CD8-positive, alpha-beta memory T cell (primary cell): ENCODE measurements at regions of chr3 and their contacts with region 1.

Region 1: DNA sequence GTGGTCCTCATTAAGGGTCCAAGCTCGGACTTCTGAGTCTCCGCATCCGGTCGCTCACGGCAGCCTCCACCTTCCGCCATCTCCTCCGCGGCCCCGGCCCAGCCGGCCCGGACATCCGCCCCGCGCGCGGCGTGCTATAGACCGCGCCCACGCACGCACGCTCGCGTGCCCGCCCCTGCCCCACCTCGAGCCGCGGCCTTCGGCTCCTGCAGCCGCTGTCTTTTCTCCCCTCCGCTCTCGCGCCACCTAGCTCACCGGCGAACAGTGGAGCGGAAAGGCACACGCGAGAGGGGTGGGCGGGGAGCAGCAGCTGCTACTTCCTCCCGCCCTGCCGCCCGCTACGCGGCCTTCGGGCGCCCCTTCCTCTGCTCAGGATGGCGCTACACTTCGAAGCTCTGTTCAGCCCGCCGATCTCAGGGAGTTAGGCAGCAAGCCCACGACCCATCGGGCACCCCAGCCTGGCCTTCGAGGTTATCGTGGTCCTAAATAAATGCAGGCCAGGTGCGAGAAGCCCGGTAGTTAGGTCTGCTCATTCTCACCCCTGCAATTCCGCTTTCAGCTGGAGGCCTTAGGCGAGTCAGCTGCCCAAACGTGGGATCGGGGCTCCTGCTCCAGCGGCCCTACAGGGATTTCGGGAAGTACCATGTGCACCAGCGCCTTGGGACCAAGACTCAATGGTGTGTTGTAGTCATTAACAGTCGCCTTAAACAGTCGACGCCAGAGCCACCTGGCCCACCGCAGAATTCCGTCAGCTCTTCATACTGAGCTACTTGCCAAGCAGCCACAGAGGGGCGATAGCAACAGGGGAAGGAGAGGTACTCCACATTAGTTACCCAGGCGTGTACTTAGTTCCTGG is at the start of gene USP4:
- DNase-seq: peak; percentile 82 to 95 (median 90)
- H3K4me3 ChIP-seq: peak within 1 kb of the TSS; percentile 84
- H3K4me3 Mint-ChIP-seq: peak within 1 kb of the TSS; percentile 88 to 96 (median 95)
- H3K27ac ChIP-seq: peak within 1 kb of the TSS; percentile 98
- H3K27ac Mint-ChIP-seq: peak within 1 kb of the TSS; percentile 95 to 100 (median 97)
- H3K4me1 ChIP-seq: peaks cover 41% of the 10 kb centered on the region
- H3K4me1 Mint-ChIP-seq: peaks cover 38 to 54% (median 41%) of the 10 kb centered on the region in 3 donors
- H3K27me3 ChIP-seq: no peaks in the 10 kb centered on the region
- H3K27me3 Mint-ChIP-seq: peaks cover 0 to 1% of the 10 kb centered on the region in 2 donors
- total RNA-seq, gene USP4: 72.6 to 73.0 TPM

Region 2: GRCh38 chr3:49199239-49199899 is 140.8 kb before region 1 on chr3:
- CTCF ChIA-PET with region 1: no interaction called
- POLR2A ChIA-PET with region 1: no interaction called
- DNase-seq: no peak
- H3K4me3 ChIP-seq: no peak overlapping the region
- H3K4me3 Mint-ChIP-seq: no peak overlapping the region
- H3K27ac ChIP-seq: no peak overlapping the region
- H3K27ac Mint-ChIP-seq: no peak overlapping the region
- H3K4me1 ChIP-seq: no peaks in the 10 kb centered on the region
- H3K4me1 Mint-ChIP-seq: no peaks in the 10 kb centered on the region
- H3K27me3 ChIP-seq: no peaks in the 10 kb centered on the region
- H3K27me3 Mint-ChIP-seq: peaks cover 11 to 24% of the 10 kb centered on the region in 2 donors

Region 3: DNA sequence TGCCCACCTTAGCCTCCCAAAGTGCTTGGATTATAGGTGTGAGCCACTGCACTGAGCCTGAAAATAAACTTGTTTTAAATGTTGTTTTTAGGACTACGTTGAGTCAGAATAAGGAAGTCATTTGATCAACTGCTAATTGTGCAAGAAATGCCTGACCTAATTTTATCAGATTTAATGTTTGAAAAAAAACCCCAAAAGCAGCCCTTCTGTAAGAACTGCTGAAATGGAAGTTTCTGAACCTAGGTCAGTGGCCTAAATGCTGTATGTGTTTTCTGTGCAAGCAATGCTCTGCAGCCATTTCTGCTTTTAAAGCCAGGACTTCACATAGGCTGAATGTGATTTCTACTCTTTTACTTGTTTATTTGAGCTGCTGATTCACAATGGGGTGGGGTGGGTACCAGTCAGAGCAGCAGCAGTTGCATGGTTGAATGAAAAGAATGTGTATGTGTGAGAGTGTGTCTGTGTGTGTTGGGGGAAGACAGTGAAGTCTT is 11.4 kb after region 1 on chr3:
- CTCF ChIA-PET with region 1: interaction called, 21 read pairs
- POLR2A ChIA-PET with region 1: interaction called, 7 read pairs
- DNase-seq: no peak
- H3K4me3 ChIP-seq: no peak overlapping the region
- H3K4me3 Mint-ChIP-seq: peak overlapping the region in 1 of 7 donors; percentile 44
- H3K27ac ChIP-seq: no peak overlapping the region
- H3K27ac Mint-ChIP-seq: peak overlapping the region in 3 of 8 donors; percentile 51 to 78 (median 61)
- H3K4me1 ChIP-seq: peaks cover 6% of the 10 kb centered on the region
- H3K4me1 Mint-ChIP-seq: peaks cover 6 to 14% (median 11%) of the 10 kb centered on the region in 3 donors
- H3K27me3 ChIP-seq: no peaks in the 10 kb centered on the region
- H3K27me3 Mint-ChIP-seq: peaks cover 0 to 1% of the 10 kb centered on the region in 2 donors

Region 4: DNA sequence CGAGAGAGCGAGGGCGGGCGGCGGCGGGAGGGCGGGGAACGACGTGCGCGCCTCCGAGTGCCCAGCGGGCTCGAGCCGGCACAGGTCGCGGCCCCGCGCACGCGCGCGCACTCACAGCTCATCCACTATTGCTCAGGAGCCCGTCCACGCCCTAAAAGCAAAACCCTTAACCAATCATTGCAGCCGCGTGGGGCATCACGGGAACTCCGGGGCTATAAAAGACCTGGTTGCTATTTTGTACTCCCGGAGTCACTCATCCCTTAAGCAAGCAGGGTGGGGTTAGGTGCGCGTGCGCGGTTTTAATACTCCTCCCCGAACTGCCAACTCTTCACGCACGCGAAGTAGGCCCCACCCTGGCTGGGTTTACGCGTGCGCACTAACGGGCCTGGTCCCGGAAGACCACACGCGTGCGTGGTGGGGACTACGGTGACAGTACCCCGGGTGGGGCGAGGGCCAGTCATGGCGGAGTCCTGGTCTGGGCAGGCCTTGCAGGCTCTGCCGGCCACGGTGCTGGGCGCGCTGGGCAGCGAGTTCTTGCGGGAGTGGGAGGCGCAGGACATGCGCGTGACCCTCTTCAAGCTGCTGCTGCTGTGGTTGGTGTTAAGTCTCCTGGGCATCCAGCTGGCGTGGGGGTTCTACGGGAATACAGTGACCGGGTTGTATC is 71.9 kb after region 1 on chr3 and contains the starts of genes RHOA and TCTA:
- CTCF ChIA-PET with region 1: interaction called, 19 read pairs
- POLR2A ChIA-PET with region 1: interaction called, 53 read pairs
- DNase-seq: peak; percentile 98 to 100 (median 99)
- H3K4me3 ChIP-seq: peak within 1 kb of the TSS; percentile 93
- H3K4me3 Mint-ChIP-seq: peak within 1 kb of the TSS; percentile 88 to 96 (median 94)
- H3K27ac ChIP-seq: peak within 1 kb of the TSS; percentile 95
- H3K27ac Mint-ChIP-seq: peak within 1 kb of the TSS; percentile 90 to 97 (median 96)
- H3K4me1 ChIP-seq: peaks cover 76% of the 10 kb centered on the region
- H3K4me1 Mint-ChIP-seq: peaks cover 69 to 82% (median 74%) of the 10 kb centered on the region in 3 donors
- H3K27me3 ChIP-seq: no peaks in the 10 kb centered on the region
- H3K27me3 Mint-ChIP-seq: peaks cover 0 to 2% of the 10 kb centered on the region in 2 donors
- total RNA-seq, gene RHOA: 478 to 506 TPM
- total RNA-seq, gene TCTA: 21.3 to 23.2 TPM

Region 5: DNA sequence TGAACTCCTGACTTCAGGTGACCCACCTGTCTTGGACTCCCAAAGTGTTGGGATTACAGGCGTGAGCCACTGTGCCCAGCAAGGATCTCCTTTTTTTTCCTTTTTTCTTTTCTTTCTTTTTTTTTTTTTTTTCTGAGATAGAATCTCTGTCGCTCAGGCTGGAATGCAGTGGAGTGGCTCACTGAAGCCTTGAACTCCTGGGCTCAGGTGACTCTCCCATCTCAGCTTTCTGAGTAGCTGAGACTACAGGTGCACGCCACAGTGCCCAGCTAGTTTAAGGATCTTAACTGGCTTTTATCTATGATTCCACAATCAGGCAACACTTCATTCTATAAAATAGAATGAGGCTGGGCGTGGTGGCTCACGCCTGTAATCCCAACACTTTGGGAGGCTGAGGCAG is 105.2 kb after region 1 on chr3:
- CTCF ChIA-PET with region 1: interaction called, 69 read pairs
- POLR2A ChIA-PET with region 1: interaction called, 19 read pairs
- DNase-seq: no peak
- H3K4me3 ChIP-seq: no peak overlapping the region
- H3K4me3 Mint-ChIP-seq: no peak overlapping the region
- H3K27ac ChIP-seq: no peak overlapping the region
- H3K27ac Mint-ChIP-seq: peak overlapping the region in 3 of 8 donors; percentile 35 to 95 (median 60)
- H3K4me1 ChIP-seq: peaks cover 20% of the 10 kb centered on the region
- H3K4me1 Mint-ChIP-seq: peaks cover 10 to 18% (median 12%) of the 10 kb centered on the region in 3 donors
- H3K27me3 ChIP-seq: no peaks in the 10 kb centered on the region
- H3K27me3 Mint-ChIP-seq: no peaks in the 10 kb centered on the region

Region 6: GRCh38 chr3:49469936-49470713 is 130.0 kb after region 1 on chr3 and contains the start of gene DAG1:
- CTCF ChIA-PET with region 1: no interaction called
- POLR2A ChIA-PET with region 1: interaction called, 23 read pairs
- DNase-seq: peak; percentile 94 to 96 (median 95)
- H3K4me3 ChIP-seq: peak within 1 kb of the TSS; percentile 96
- H3K4me3 Mint-ChIP-seq: peak within 1 kb of the TSS; percentile 89 to 95 (median 90)
- H3K27ac ChIP-seq: peak within 1 kb of the TSS; percentile 82
- H3K27ac Mint-ChIP-seq: peak within 1 kb of the TSS; percentile 93 to 98 (median 96)
- H3K4me1 ChIP-seq: peaks cover 25% of the 10 kb centered on the region
- H3K4me1 Mint-ChIP-seq: peaks cover 22 to 26% (median 24%) of the 10 kb centered on the region in 3 donors
- H3K27me3 ChIP-seq: no peaks in the 10 kb centered on the region
- H3K27me3 Mint-ChIP-seq: no peaks in the 10 kb centered on the region
- total RNA-seq, gene DAG1: 20.9 to 21.2 TPM

Region 7: GRCh38 chr3:49566312-49566711 is 226.1 kb after region 1 on chr3:
- CTCF ChIA-PET with region 1: no interaction called
- POLR2A ChIA-PET with region 1: no interaction called
- DNase-seq: no peak
- H3K4me3 ChIP-seq: no peak overlapping the region
- H3K4me3 Mint-ChIP-seq: no peak overlapping the region
- H3K27ac ChIP-seq: no peak overlapping the region
- H3K27ac Mint-ChIP-seq: no peak overlapping the region
- H3K4me1 ChIP-seq: no peaks in the 10 kb centered on the region
- H3K4me1 Mint-ChIP-seq: no peaks in the 10 kb centered on the region
- H3K27me3 ChIP-seq: no peaks in the 10 kb centered on the region
- H3K27me3 Mint-ChIP-seq: peaks cover 0 to 18% of the 10 kb centered on the region in 2 donors